ENCODE measurements at regions of chr16 and their contacts with region 1.

Region 1: GRCh38 chr16:55323637-55324490 is at the start of gene IRX6:
- DNase-seq: peak; percentile 89
- H3K4me3 ChIP-seq: peak within 1 kb of the TSS; percentile 44 to 58; a peak in 3 of 4 replicates
- H3K27ac ChIP-seq: peak within 1 kb of the TSS in 1 of 2 experiments; percentile 39; a peak in 1 of 4 replicates
- H3K4me1 ChIP-seq: peaks cover 0 to 10% of the 10 kb centered on the region in 2 experiments; a peak in 2 of 4 replicates
- H3K27me3 ChIP-seq: no peaks in the 10 kb centered on the region
- CTCF ChIP-seq: peak; percentile 52
- EP300 ChIP-seq: no peak
- RAD21 ChIP-seq: peak; percentile 53
- polyA plus RNA-seq, gene IRX6: not detected in 2 replicates

Region 2: DNA sequence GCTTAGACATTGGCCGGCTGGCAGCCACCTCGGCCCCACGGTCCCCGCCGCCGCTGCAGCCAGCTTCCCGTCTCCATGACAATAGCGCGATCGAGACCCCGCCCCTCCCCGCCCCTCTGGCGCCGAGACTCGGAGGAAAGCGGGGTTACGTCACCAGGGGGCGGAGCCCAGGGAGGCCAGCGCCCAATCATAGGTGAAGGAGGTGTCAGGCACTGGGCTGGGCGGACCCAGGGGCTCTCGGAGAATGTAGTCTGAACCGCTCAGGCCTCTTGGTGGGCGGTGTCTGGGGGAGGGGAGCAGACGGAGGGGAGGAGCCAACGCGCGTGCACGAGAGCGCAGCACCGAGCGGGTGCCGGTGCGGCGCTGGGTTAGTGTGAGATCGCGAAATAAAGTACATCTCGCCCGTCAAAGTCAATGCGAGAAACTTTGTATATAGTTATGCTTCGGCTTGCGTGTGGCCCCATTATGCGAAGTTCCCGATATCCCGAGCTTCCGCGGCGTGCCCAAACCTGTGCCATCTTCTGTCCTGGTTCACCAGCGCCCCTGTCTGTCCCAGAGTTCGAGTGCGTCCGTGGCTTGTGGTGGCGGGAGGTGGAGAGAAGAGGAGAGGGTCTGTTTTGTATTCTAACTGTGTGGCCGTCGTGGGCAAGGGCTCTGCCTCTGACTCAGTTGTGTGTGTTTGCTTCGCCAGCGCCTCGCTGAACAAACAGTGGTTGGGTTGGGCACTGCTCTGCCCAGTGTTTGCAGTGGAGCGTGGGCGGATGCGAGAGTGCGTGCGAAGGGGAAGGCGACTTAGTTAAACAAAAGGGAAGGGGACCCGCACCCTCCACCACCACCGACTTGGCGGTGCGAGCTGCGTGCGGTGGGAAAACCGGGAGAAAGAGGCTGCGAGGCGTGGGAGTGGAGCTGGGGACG is 394.5 kb before region 1 on chr16:
- CTCF ChIA-PET with region 1: interaction called, 13 read pairs
- POLR2A ChIA-PET with region 1: no interaction called
- DNase-seq: peak; percentile 92
- H3K4me3 ChIP-seq: peak overlapping the region; percentile 81 to 89
- H3K27ac ChIP-seq: peak overlapping the region; percentile 81 to 95
- H3K4me1 ChIP-seq: peaks cover 2 to 20% of the 10 kb centered on the region in 2 experiments; a peak in 3 of 4 replicates
- H3K27me3 ChIP-seq: no peaks in the 10 kb centered on the region
- CTCF ChIP-seq: peak; percentile 44
- EP300 ChIP-seq: no peak
- RAD21 ChIP-seq: peak; percentile 50

Region 3: GRCh38 chr16:55083052-55083451 is 240.8 kb before region 1 on chr16:
- CTCF ChIA-PET with region 1: no interaction called
- POLR2A ChIA-PET with region 1: no interaction called
- DNase-seq: peak; percentile 35
- H3K4me3 ChIP-seq: no peak overlapping the region
- H3K27ac ChIP-seq: no peak overlapping the region
- H3K4me1 ChIP-seq: no peaks in the 10 kb centered on the region; a peak in 1 of 4 replicates
- H3K27me3 ChIP-seq: no peaks in the 10 kb centered on the region
- CTCF ChIP-seq: no peak
- EP300 ChIP-seq: no peak
- RAD21 ChIP-seq: no peak

Region 4: DNA sequence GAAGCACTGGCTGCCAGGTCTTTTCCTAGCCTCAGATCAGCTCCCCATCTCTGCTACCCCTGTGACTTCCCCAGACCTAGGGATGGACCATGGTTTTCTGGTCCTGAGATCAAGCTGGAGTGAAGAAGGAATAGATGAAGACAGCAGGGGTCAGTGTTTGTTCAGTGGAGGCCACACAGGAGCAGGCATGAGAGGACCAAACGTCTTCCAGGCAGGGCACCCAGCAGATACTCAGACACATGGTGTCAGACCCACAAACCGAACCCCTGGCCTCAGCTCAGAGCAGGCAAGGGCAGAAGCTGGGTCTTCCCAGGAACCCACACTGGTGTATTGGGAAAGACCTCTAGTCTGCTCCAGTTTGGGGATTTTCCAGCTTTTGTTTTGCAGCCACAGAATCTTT is 203.5 kb before region 1 on chr16:
- CTCF ChIA-PET with region 1: interaction called, 44 read pairs
- POLR2A ChIA-PET with region 1: interaction called, 3 read pairs
- DNase-seq: peak; percentile 50
- H3K4me3 ChIP-seq: no peak overlapping the region
- H3K27ac ChIP-seq: no peak overlapping the region
- H3K4me1 ChIP-seq: peaks cover 0 to 10% of the 10 kb centered on the region in 2 experiments; a peak in 1 of 4 replicates
- H3K27me3 ChIP-seq: no peaks in the 10 kb centered on the region
- CTCF ChIP-seq: no peak
- EP300 ChIP-seq: no peak
- RAD21 ChIP-seq: peak; percentile 79

Region 5: GRCh38 chr16:55294931-55295342 is 28.9 kb before region 1 on chr16:
- CTCF ChIA-PET with region 1: interaction called, 14 read pairs
- POLR2A ChIA-PET with region 1: no interaction called
- DNase-seq: no peak
- H3K4me3 ChIP-seq: no peak overlapping the region
- H3K27ac ChIP-seq: peak overlapping the region in 1 of 2 experiments; percentile 44; a peak in 1 of 4 replicates
- H3K4me1 ChIP-seq: peaks cover 0 to 6% of the 10 kb centered on the region in 2 experiments; a peak in 1 of 4 replicates
- H3K27me3 ChIP-seq: no peaks in the 10 kb centered on the region
- CTCF ChIP-seq: no peak
- EP300 ChIP-seq: no peak
- RAD21 ChIP-seq: no peak

Region 6: DNA sequence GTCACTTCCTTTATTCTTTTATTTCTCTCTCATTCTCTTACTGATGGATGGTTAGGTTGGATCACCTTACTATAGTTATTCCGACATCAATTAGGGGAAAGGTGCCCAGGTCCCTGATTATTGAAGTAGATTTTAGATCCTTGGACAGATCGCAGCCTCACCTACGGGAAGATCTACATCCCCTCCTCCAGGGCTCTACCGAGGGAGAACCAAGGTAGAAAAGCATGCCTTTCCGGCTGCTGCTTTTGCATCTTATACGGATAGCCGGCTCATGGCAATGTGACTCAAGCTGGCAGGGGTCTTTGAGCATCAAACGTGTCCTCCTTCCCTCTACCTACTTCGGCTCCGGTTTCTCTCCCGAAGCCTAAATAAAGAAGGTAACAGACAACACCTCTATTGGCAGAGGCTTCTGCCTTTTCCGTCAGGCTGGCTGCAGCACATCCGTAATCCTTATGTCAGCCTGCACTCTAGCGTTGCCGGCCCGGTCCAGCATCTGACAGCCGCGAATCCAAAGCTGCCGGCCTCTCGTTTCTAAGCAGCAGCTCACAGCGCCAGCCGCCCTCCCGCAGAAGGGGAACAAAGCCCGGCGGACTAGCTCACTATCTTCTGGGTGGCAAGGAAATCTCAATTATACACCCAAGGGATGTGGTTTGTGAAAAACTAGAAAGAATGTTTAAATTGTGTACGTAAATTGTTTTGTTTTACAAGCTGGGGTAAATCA is 47.1 kb after region 1 on chr16:
- CTCF ChIA-PET with region 1: interaction called, 38 read pairs
- POLR2A ChIA-PET with region 1: no interaction called
- DNase-seq: peak; percentile 71
- H3K4me3 ChIP-seq: no peak overlapping the region; a peak in 1 of 4 replicates
- H3K27ac ChIP-seq: no peak overlapping the region
- H3K4me1 ChIP-seq: peaks cover 19 to 25% of the 10 kb centered on the region in 2 experiments; a peak in 3 of 4 replicates
- H3K27me3 ChIP-seq: peaks cover 9% of the 10 kb centered on the region; the same call in 1 of the 2 replicates
- CTCF ChIP-seq: peak; percentile 45
- EP300 ChIP-seq: no peak
- RAD21 ChIP-seq: peak; percentile 95